Right ventricle myocardium inferior (tissue), 1 donor: ENCODE measurements at regions of chr12 and their contacts with region 1.

Region 1: DNA sequence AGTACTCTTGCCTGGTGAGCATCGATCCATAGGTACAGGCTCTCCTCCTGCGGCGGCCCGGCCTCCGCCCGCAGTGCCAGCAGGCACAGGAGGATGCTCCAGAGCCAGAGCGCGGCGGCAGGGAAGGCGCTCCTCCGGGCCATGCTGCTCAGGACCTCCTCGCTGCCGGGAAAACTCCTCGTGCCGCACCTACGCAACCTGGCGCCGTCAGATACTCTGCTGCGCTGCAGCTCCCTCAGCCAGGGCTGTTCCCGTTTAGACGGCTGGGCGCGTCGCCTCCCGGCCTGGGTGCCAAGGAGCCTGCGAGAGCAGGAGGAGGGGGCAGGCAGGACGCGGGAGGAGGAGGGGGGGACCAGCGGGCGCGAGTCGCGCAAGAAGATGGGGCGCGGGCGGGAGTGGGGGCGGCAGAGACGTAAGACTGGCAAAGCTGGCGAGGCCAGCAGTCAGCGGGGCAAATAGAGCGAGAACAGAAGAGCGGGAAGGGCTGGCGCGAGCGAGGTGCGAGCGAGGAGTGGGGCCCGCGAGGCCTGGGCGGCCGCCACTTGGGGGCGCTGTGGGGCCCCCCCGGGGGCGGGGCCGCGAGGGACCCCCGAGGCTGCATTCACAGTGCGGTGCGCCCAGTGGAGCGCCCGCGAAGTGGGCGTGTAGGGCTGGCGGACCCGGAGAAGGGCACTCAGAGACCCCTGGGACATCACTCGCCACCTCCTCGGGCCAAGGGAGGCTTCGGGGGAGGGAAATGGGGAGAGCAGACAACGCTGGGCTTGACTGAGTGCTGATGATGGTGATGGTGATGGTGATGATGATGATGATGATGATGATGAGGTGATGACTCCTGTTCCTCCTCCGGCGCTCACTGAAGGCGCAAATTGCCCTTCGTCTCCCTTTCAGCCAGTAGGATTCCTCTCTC is at the start of gene WIF1:
- DNase-seq: peak; percentile 72
- ATAC-seq: no peak
- total RNA-seq, gene WIF1: 0.62 TPM

Region 2: GRCh38 chr12:64801381-64801780 is 319.9 kb before region 1 on chr12:
- intact Hi-C with region 1: loop called (anchors 10 kb)
- DNase-seq: no peak
- ATAC-seq: no peak

Region 3: GRCh38 chr12:65232476-65233077 is 111.3 kb after region 1 on chr12:
- intact Hi-C with region 1: loop called (anchors 5 kb)
- DNase-seq: no peak
- ATAC-seq: no peak